Right cardiac atrium (tissue), 5 donors: ENCODE measurements at regions of chr5 and their contacts with region 1.

Region 1: GRCh38 chr5:150672237-150672883 is 11.3 kb downstream of the MYOZ3 start:
- DNase-seq: peak; percentile 69 to 87 (median 85)
- ATAC-seq: peak; percentile 44 to 60
- H3K4me3 ChIP-seq: peak overlapping the region; percentile 51
- H3K27ac ChIP-seq: no peak overlapping the region
- H3K4me1 ChIP-seq: peaks cover 10% of the 10 kb centered on the region
- H3K27me3 ChIP-seq: no peaks in the 10 kb centered on the region

Region 2: GRCh38 chr5:150449517-150450339 is 222.6 kb before region 1 on chr5 and contains the start of gene RPS14:
- intact Hi-C with region 1: loop called in 1 of 4 experiments (anchors 10 kb)
- DNase-seq: peak; percentile 96 to 98 (median 97)
- ATAC-seq: peak; percentile 97 to 98
- H3K4me3 ChIP-seq: peak within 1 kb of the TSS; percentile 74
- H3K27ac ChIP-seq: peak within 1 kb of the TSS; percentile 98
- H3K4me1 ChIP-seq: peaks cover 6% of the 10 kb centered on the region
- H3K27me3 ChIP-seq: no peaks in the 10 kb centered on the region
- total RNA-seq, gene RPS14: 1,254 to 1,552 (median 1,386) TPM

Region 3: GRCh38 chr5:150879358-150879757 is 207.0 kb after region 1 on chr5:
- intact Hi-C with region 1: no loop called
- DNase-seq: no peak
- ATAC-seq: no peak
- H3K4me3 ChIP-seq: no peak overlapping the region
- H3K27ac ChIP-seq: no peak overlapping the region
- H3K4me1 ChIP-seq: no peaks in the 10 kb centered on the region
- H3K27me3 ChIP-seq: no peaks in the 10 kb centered on the region